ENCODE measurements at regions of chr17 and their contacts with region 1.

Region 1: DNA sequence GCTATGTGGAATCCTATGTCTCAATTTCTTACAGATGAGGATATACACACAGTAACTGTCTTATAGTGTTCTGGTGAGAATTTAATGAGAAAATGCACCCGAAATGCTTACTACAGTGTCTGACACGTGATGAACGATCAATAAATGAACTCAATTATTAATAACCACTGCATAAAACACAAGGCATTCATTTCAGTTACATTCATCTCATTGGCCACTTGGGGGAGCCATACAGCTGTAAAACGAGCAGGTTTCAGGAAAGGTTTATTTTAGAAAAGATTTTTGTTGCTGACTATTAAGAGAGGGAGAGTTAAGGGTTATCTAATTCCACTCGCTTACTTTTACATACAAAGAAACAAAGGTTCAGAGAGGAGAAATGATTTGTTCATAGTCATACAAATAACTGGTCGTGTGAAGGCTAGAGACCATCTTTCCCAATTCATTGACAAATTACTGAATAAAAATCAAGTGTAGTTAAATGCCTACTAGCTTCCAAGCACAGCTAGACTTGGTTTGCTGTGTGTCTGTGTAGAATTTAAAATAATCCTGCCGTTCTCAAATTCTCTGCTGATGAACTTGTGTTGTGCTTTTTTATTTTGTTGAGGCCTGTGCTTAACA is 160.1 kb downstream of the MAP2K4 start:
- DNase-seq: peak; percentile 47
- ATAC-seq: no peak
- H3K4me3 Mint-ChIP-seq: no peak overlapping the region
- H3K27ac Mint-ChIP-seq: no peak overlapping the region
- H3K4me1 Mint-ChIP-seq: no peaks in the 10 kb centered on the region
- H3K27me3 Mint-ChIP-seq: no peaks in the 10 kb centered on the region
- CTCF ChIP-seq: peak; percentile 76

Region 2: GRCh38 chr17:12963505-12963904 is 782.8 kb after region 1 on chr17:
- CTCF ChIA-PET with region 1: no interaction called
- POLR2A ChIA-PET with region 1: no interaction called
- intact Hi-C with region 1: loop called (anchors 10 kb)
- DNase-seq: no peak
- ATAC-seq: no peak
- H3K4me3 Mint-ChIP-seq: no peak overlapping the region
- H3K27ac Mint-ChIP-seq: no peak overlapping the region
- H3K4me1 Mint-ChIP-seq: no peaks in the 10 kb centered on the region
- H3K27me3 Mint-ChIP-seq: peaks cover 1% of the 10 kb centered on the region
- CTCF ChIP-seq: no peak

Measured in activated CD8-positive, alpha-beta T cell treated with anti-CD3 and anti-CD28 coated beads for 36 hours (primary cell).